Activated naive CD4-positive, alpha-beta T cell treated with anti-CD3 and anti-CD28 coated beads for 36 hours (primary cell): ENCODE measurements at regions of chr7 and their contacts with region 1.

Region 1: GRCh38 chr7:111012799-111013675 is 77.9 kb upstream of the LRRN3 start:
- DNase-seq: peak; percentile 67
- H3K4me3 Mint-ChIP-seq: peak overlapping the region; percentile 37
- H3K27ac Mint-ChIP-seq: peak overlapping the region; percentile 86
- H3K4me1 Mint-ChIP-seq: peaks cover 72% of the 10 kb centered on the region
- H3K27me3 Mint-ChIP-seq: no peaks in the 10 kb centered on the region

Region 2: GRCh38 chr7:110693344-110693743 is 319.7 kb before region 1 on chr7:
- CTCF ChIA-PET with region 1: no interaction called
- intact Hi-C with region 1: no loop called
- DNase-seq: no peak
- H3K4me3 Mint-ChIP-seq: no peak overlapping the region
- H3K27ac Mint-ChIP-seq: no peak overlapping the region
- H3K4me1 Mint-ChIP-seq: no peaks in the 10 kb centered on the region
- H3K27me3 Mint-ChIP-seq: no peaks in the 10 kb centered on the region

Region 3: DNA sequence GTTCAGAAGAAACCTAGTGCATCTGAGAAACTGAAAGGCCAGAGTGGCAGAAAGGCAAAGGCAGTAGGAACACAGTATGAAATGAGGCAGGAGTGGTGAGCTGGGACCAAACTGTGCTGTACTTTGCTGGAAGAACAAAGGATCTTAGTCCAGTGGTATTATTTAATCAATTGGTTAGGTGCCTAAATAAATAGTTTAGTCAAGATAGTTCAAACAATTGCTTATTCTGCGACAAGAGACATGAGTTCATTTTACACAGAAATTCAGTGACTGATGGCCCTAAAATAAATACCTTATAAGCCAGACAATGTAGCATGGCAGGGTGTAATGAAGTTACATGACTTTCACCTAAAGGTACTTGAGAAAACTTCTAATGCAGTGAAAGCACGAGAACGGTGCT is 103.9 kb before region 1 on chr7:
- CTCF ChIA-PET with region 1: no interaction called
- intact Hi-C with region 1: loop called (anchors 5 kb)
- DNase-seq: no peak
- H3K4me3 Mint-ChIP-seq: no peak overlapping the region
- H3K27ac Mint-ChIP-seq: no peak overlapping the region
- H3K4me1 Mint-ChIP-seq: peaks cover 20% of the 10 kb centered on the region
- H3K27me3 Mint-ChIP-seq: no peaks in the 10 kb centered on the region

Region 4: DNA sequence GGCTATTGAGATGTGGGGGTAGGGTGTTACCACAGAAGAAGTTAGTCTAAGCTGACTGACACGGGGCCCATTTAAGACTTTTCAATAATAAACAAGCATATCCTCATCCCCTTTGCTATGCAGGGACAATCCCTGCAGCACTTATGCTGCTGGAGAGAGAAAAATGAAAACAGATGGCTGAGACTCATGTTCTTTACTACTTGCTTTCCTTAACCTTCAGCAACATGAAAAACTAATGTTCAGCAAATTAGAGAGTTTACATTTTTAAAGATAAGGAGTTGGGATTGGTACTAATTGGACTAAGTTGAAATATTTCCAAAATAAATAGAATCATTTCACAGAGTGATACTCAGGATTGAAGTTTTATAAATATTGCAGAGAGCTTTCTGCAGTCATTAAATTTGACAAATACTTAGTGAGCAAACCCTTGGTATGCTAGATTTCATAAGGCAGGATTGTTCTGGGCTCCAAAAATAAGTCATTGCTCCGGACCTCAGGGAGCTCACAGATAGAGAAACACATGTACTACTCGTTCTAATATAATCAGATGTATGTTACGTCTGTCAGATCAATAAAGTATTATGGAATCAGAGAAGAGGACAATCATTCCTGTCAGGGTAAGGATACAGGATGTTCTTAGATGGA is 69.2 kb before region 1 on chr7:
- CTCF ChIA-PET with region 1: no interaction called
- intact Hi-C with region 1: no loop called
- DNase-seq: no peak
- H3K4me3 Mint-ChIP-seq: no peak overlapping the region
- H3K27ac Mint-ChIP-seq: no peak overlapping the region
- H3K4me1 Mint-ChIP-seq: peaks cover 8% of the 10 kb centered on the region
- H3K27me3 Mint-ChIP-seq: no peaks in the 10 kb centered on the region

Region 5: DNA sequence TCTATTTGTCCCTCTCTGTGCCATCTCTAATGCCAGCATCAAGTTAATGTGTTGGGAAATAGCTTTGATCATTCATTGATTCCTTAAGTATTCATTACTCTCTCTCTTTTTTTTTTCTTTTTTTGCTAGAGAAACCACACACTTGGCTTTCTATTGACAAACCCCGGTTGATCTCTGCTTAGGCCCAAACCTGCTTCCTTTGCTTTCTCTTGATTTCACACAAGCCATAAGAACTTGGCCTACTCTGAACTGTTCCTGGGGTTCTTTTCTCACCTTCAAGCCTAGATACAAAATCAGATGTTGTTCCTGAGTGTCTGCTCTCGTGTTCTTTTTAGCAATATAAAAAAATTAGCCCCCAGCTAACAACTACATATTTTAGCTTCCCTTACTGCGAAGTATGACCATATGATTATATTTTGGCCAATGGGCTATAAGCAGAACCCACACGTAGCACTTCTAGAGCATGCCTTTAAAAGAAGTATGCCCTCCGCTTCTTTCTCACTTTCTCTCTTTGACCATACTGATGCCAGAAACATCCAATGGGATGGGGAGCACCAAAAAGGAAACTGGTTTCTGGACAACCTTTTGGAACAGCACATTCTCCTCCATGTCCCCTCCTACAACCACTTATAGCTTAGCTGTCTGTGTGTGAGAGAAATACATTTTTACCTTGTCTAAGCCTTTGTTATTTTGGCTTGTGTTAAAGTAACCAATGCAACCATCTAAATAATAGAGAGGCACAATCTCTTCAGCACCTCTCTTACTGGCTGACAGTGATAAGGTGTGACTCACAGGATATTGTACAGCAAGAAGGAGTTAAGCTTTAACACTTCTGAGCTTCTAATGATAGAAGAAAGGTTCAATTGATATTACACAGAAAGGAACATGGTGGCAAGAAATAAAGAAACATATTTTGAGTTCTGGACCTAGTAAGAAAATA is 18.7 kb before region 1 on chr7:
- CTCF ChIA-PET with region 1: no interaction called
- intact Hi-C with region 1: loop called (anchors 1 kb)
- DNase-seq: no peak
- H3K4me3 Mint-ChIP-seq: no peak overlapping the region
- H3K27ac Mint-ChIP-seq: no peak overlapping the region
- H3K4me1 Mint-ChIP-seq: peaks cover 26% of the 10 kb centered on the region
- H3K27me3 Mint-ChIP-seq: no peaks in the 10 kb centered on the region

Region 6: GRCh38 chr7:111076205-111076604 is 63.2 kb after region 1 on chr7:
- CTCF ChIA-PET with region 1: no interaction called
- intact Hi-C with region 1: loop called (anchors 1 kb)
- DNase-seq: peak; percentile 63
- H3K4me3 Mint-ChIP-seq: no peak overlapping the region
- H3K27ac Mint-ChIP-seq: peak overlapping the region; percentile 20
- H3K4me1 Mint-ChIP-seq: peaks cover 65% of the 10 kb centered on the region
- H3K27me3 Mint-ChIP-seq: no peaks in the 10 kb centered on the region

Region 7: GRCh38 chr7:111098011-111098925 is 85.2 kb after region 1 on chr7:
- CTCF ChIA-PET with region 1: no interaction called
- intact Hi-C with region 1: loop called (anchors 1 kb)
- DNase-seq: peak; percentile 83
- H3K4me3 Mint-ChIP-seq: peak overlapping the region; percentile 70
- H3K27ac Mint-ChIP-seq: peak overlapping the region; percentile 85
- H3K4me1 Mint-ChIP-seq: peaks cover 68% of the 10 kb centered on the region
- H3K27me3 Mint-ChIP-seq: no peaks in the 10 kb centered on the region

Region 8: GRCh38 chr7:111561885-111562732 is 549.1 kb after region 1 on chr7 and contains the start of gene IMMP2L:
- CTCF ChIA-PET with region 1: no interaction called
- intact Hi-C with region 1: loop called (anchors 10 kb)
- DNase-seq: peak; percentile 89
- H3K4me3 Mint-ChIP-seq: peak within 1 kb of the TSS; percentile 89
- H3K27ac Mint-ChIP-seq: peak within 1 kb of the TSS; percentile 85
- H3K4me1 Mint-ChIP-seq: peaks cover 32% of the 10 kb centered on the region
- H3K27me3 Mint-ChIP-seq: no peaks in the 10 kb centered on the region
- total RNA-seq, gene IMMP2L: 24.4 to 26.6 TPM

Region 9: DNA sequence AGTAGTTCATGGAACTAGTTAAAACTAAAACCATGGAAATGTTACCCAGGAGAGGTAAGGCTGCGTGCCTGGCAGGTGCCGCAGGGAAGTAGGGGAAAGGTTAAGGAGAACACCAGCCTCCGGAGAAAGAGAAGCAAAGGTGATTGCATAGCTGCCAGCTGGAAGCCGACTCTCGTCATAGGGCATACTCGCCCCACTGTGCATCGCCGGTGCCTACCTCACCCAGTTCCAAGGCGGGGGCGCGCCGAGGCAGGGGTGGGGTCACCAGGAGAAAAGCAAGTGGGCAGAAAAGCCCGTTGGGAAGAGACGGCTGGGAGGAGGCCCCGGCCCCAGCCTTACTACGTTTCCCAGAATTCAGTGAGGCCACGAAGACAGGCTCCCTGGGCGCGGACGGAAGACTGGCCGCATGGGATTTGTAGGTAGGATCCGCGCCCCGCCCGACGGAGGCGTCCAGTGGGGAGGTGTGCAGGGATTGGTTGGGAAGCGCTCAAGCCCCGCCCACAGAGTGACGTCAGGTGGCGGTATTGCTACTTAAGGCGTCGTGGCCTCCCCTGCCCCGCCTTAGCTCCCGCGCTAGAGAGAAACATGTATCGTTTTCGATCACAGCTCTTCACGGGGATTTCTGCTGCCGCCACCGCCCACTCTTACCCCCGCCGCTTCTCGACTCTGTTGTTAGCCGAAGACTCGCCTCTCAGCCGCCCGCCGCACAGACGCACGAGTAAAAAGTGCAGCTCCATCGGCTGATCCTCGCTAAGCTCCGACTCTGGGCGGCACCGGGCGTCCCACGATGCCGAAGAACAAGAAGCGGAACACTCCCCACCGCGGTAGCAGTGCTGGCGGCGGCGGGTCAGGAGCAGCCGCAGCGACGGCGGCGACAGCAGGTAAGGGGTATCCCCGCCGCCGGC is 1437.1 kb after region 1 on chr7 and contains the start of gene IFRD1:
- CTCF ChIA-PET with region 1: no interaction called
- intact Hi-C with region 1: loop called (anchors 10 kb)
- DNase-seq: peak; percentile 98
- H3K4me3 Mint-ChIP-seq: peak within 1 kb of the TSS; percentile 99
- H3K27ac Mint-ChIP-seq: peak within 1 kb of the TSS; percentile 99
- H3K4me1 Mint-ChIP-seq: peaks cover 39% of the 10 kb centered on the region
- H3K27me3 Mint-ChIP-seq: no peaks in the 10 kb centered on the region
- total RNA-seq, gene IFRD1: 47.3 to 50.5 TPM